Kidney (tissue), 22 donors: ENCODE measurements at regions of chr11 and their contacts with region 1.

Region 1: GRCh38 chr11:10307442-10308207 is 2.8 kb downstream of the ADM start:
- DNase-seq: peak; percentile 83 to 95 (median 92)
- H3K4me3 ChIP-seq: peak overlapping the region; percentile 57 to 94 (median 94)
- H3K27ac ChIP-seq: peak overlapping the region; percentile 99
- H3K4me1 ChIP-seq: peaks cover 0 to 17% (median 7%) of the 10 kb centered on the region in 3 donors
- H3K27me3 ChIP-seq: no peaks in the 10 kb centered on the region
- CTCF ChIP-seq: peak; percentile 96

Region 2: DNA sequence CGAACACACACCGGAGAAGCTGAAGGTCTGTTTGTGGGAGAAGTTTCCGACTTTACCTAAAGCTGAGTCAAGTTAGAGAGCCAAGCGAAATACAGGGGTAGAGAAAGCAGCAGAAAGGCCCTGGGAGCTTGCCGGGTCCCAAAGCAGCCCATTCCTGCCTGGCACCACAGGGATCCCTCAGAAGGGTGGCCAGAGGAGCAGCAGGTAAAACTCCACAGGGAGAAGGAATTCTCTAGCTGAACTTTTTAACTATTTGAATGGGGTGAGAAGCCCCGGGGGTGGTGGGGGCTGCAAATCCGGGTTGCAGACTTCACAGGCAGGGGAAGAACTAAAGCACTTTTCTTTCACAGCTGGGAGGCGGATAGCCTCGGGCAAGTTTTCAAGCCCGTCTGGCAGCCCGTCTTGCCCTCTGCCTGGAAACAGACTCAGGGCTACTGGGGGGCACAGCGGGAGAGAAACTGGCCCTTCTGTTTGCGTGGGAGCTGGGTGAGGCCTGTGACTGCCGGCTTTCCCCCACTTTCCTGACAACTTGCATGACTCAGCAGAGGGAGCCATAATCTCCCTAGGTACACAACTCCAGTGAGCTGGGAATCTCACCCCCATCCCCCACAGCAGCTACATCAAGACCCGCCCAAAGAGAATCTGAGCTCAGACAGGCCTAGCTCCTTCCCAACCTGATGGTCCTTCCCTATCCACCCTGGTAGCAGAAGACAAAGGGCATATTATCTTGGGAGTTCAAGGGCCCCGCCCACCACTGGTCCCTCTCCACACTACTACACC is 324.6 kb before region 1 on chr11:
- intact Hi-C with region 1: loop called (anchors 10 kb)
- DNase-seq: no peak
- H3K4me3 ChIP-seq: no peak overlapping the region
- H3K27ac ChIP-seq: no peak overlapping the region
- H3K4me1 ChIP-seq: no peaks in the 10 kb centered on the region
- H3K27me3 ChIP-seq: no peaks in the 10 kb centered on the region
- CTCF ChIP-seq: no peak

Region 3: DNA sequence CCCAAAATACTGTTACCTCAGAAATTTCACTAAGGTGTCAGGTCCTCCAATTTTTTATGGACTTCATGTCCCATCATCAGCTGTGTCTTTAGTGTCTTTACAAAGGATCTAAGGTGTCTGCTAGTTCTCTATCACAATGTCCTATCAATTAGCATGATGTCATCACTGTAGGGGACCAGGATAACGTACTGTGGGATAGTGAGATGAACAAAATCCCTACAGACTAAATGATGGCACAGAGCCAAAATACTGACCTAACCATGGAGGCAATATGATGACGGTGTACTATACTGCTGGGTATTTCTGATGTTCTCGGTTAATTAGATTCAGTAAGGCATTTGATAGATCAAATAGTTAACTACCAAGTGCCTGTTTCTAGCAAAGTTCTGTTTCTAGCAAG is 96.2 kb before region 1 on chr11:
- intact Hi-C with region 1: loop called (anchors 10 kb)
- DNase-seq: no peak
- H3K4me3 ChIP-seq: no peak overlapping the region
- H3K27ac ChIP-seq: no peak overlapping the region
- H3K4me1 ChIP-seq: no peaks in the 10 kb centered on the region
- H3K27me3 ChIP-seq: no peaks in the 10 kb centered on the region
- CTCF ChIP-seq: no peak